IMR-90 (cell line): ENCODE measurements at regions of chr9 and their contacts with region 1.

Region 1: GRCh38 chr9:109977521-109977920 is 197.5 kb downstream of the PALM2AKAP2 start:
- DNase-seq: no peak
- ATAC-seq: no peak
- H3K4me3 ChIP-seq: no peak overlapping the region
- H3K27ac ChIP-seq: no peak overlapping the region
- H3K4me1 ChIP-seq: peaks cover 2% of the 10 kb centered on the region; the same call in 1 of the 2 replicates
- H3K27me3 ChIP-seq: no peaks in the 10 kb centered on the region
- CTCF ChIP-seq: no peak
- POLR2A ChIP-seq: no peak
- RAD21 ChIP-seq: no peak

Region 2: GRCh38 chr9:109689701-109690100 is 287.8 kb before region 1 on chr9:
- CTCF ChIA-PET with region 1: no interaction called
- POLR2A ChIA-PET with region 1: no interaction called
- dilution Hi-C with region 1: no loop called
- in situ Hi-C with region 1: no loop called
- intact Hi-C with region 1: no loop called
- DNase-seq: no peak
- ATAC-seq: no peak
- H3K4me3 ChIP-seq: no peak overlapping the region
- H3K27ac ChIP-seq: no peak overlapping the region
- H3K4me1 ChIP-seq: no peaks in the 10 kb centered on the region
- H3K27me3 ChIP-seq: peaks cover 3% of the 10 kb centered on the region
- CTCF ChIP-seq: no peak
- POLR2A ChIP-seq: no peak
- RAD21 ChIP-seq: no peak

Region 3: GRCh38 chr9:110031511-110032173 is 54.1 kb after region 1 on chr9:
- CTCF ChIA-PET with region 1: interaction called, 10 read pairs
- POLR2A ChIA-PET with region 1: no interaction called
- dilution Hi-C with region 1: no loop called
- in situ Hi-C with region 1: no loop called
- intact Hi-C with region 1: no loop called
- DNase-seq: peak; percentile 92
- ATAC-seq: peak; percentile 57
- H3K4me3 ChIP-seq: no peak overlapping the region
- H3K27ac ChIP-seq: peak overlapping the region; percentile 64
- H3K4me1 ChIP-seq: peaks cover 20% of the 10 kb centered on the region
- H3K27me3 ChIP-seq: no peaks in the 10 kb centered on the region
- CTCF ChIP-seq: no peak
- POLR2A ChIP-seq: no peak
- RAD21 ChIP-seq: no peak